HepG2 (cell line): ENCODE measurements at regions of chr2 and their contacts with region 1.

Region 1: DNA sequence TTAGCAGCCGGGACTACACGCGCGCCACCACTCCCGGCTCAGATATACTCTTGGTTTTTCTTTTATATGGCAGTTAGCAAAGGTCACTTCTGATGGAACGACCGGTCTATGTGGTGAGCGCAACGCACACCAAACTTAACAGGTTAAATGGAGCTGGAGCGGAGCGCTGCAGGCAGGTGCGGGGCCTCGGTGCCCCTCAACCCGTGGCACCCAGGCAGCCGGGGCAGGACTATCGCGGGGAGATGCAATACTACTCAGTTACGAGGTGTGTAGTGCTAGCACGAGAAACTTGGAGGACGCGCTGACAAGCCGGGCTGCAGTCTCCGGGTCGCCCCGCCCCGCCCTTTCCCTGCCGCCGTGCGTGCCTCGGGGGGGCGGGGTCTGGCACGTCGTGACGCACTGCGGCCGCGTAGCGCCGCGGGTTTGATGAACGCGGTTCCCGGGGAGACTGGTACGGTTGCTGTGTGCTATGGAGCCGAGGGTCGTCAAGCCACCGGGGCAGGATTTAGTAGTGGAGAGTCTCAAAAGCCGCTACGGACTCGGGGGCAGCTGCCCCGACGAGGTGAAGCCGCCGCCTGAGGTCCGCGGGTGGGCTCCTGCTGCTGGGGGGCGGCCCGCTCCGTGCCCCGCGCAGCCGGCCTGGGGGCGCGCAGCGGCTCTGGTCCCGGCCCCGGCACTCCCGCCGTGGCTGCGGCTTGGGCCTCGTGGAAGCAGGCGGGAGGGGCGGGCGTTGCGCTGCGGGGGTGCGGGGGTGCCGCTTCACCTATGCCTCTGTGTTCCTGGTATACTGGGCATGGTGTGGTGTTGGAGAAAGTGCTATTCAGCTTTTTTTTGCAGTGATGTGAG is at the start of gene CCDC138:
- DNase-seq: peak; percentile 87
- ATAC-seq: peak; percentile 98
- H3K4me3 ChIP-seq: peak within 1 kb of the TSS; percentile 82 to 87 (median 87)
- H3K27ac ChIP-seq: peak within 1 kb of the TSS; percentile 81
- H3K4me1 ChIP-seq: peaks cover 28% of the 10 kb centered on the region
- H3K27me3 ChIP-seq: no peaks in the 10 kb centered on the region
- CTCF ChIP-seq: 0 out of 2 replicates have a peak, but pooled peaks have one; percentile 31
- EP300 ChIP-seq: 0 out of 4 replicates have a peak, but pooled peaks of 1 of the 2 experiments have one; percentile 16
- POLR2A ChIP-seq: peak; percentile 85 to 90
- RAD21 ChIP-seq: peak; percentile 53
- total RNA-seq, gene CCDC138: 32.5 and 44.3 TPM in 2 replicates

Region 2: DNA sequence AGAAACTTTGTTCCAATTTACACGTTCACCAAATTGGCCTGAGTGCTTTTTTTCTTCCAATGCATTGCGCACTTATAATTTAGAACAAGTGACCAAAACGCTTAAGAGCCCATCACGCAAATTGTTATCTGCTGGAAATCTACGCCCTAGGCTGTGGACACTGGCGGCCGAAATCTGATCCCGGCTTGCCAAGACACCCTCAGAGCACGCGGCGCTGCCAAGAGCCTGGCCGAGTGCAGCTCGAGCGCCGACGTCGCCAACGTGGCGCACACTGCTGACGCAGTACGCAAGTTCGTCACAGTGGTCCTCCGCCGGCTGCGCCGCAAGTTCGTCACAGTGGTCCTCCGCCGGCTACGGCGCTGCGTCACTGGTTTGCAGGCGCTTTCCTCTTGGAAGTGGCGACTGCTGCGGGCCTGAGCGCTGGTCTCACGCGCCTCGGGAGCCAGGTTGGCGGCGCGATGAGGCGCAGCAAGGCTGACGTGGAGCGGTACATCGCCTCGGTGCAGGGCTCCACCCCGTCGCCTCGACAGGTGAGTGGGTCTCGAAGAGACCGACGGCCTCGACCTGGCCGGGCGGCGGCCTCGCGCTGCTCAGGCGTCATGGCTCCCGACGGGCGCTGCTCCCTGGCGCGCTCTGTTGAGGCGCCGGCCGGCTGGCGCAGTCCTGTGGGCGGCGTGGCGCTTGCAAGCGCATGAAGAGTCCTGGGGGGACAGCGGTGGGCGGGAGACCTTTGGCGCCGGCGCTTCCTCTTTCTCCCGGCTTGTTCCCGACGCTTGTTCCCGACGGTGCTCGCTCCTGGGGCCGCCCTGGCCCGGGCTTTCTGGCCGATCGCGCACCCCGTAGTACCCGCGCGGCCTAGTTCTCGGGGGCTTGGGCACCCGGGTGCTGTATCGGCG is 67.2 kb before region 1 on chr2 and contains the start of gene RANBP2:
- CTCF ChIA-PET with region 1: no interaction called
- POLR2A ChIA-PET with region 1: no interaction called
- in situ Hi-C with region 1: no loop called
- intact Hi-C with region 1: loop called (anchors 2 kb)
- DNase-seq: peak; percentile 93
- ATAC-seq: peak; percentile 94
- H3K4me3 ChIP-seq: peak within 1 kb of the TSS; percentile 59 to 94 (median 83)
- H3K27ac ChIP-seq: peak within 1 kb of the TSS; percentile 78
- H3K4me1 ChIP-seq: peaks cover 62% of the 10 kb centered on the region
- H3K27me3 ChIP-seq: no peaks in the 10 kb centered on the region
- CTCF ChIP-seq: peak; percentile 37
- EP300 ChIP-seq: peak in 1 of 2 experiments; percentile 42; a peak in 1 of 4 replicates
- POLR2A ChIP-seq: peak; percentile 96
- RAD21 ChIP-seq: no peak
- total RNA-seq, gene RANBP2: 87.0 and 151 TPM in 2 replicates

Region 3: GRCh38 chr2:108988796-108989713 is 202.5 kb after region 1 on chr2 and contains the start of gene EDAR:
- CTCF ChIA-PET with region 1: no interaction called
- POLR2A ChIA-PET with region 1: no interaction called
- in situ Hi-C with region 1: no loop called
- intact Hi-C with region 1: loop called (anchors 5 kb)
- DNase-seq: peak; percentile 54
- ATAC-seq: peak; percentile 93
- H3K4me3 ChIP-seq: peak within 1 kb of the TSS in 1 of 3 experiments; percentile 53; a peak in 2 of 6 replicates
- H3K27ac ChIP-seq: no peak within 1 kb of the TSS
- H3K4me1 ChIP-seq: peaks cover 33% of the 10 kb centered on the region
- H3K27me3 ChIP-seq: peaks cover 7 to 36% of the 10 kb centered on the region in 2 experiments; a peak in 2 of 5 replicates
- CTCF ChIP-seq: peak; percentile 92
- EP300 ChIP-seq: no peak
- POLR2A ChIP-seq: no peak
- RAD21 ChIP-seq: peak; percentile 74
- total RNA-seq, gene EDAR: not detected in 2 replicates